Activated CD8-positive, alpha-beta memory T cell treated with anti-CD3 and anti-CD28 coated beads, Interleukin-2, amount 10 ng/mL, durations not matched to agents 7 days and 5 days (primary cell): ENCODE measurements at regions of chr3 and their contacts with region 1.

Region 1: GRCh38 chr3:42101048-42101447 is 9.9 kb downstream of the TRAK1 start:
- DNase-seq: no peak
- ATAC-seq: no peak
- H3K4me3 Mint-ChIP-seq: no peak overlapping the region
- H3K27ac Mint-ChIP-seq: no peak overlapping the region
- H3K4me1 Mint-ChIP-seq: peaks cover 11% of the 10 kb centered on the region
- H3K27me3 Mint-ChIP-seq: no peaks in the 10 kb centered on the region

Region 2: GRCh38 chr3:41893977-41894376 is 207.1 kb before region 1 on chr3:
- CTCF ChIA-PET with region 1: interaction called, 17 read pairs
- DNase-seq: no peak
- ATAC-seq: no peak
- H3K4me3 Mint-ChIP-seq: no peak overlapping the region
- H3K27ac Mint-ChIP-seq: no peak overlapping the region
- H3K4me1 Mint-ChIP-seq: no peaks in the 10 kb centered on the region
- H3K27me3 Mint-ChIP-seq: no peaks in the 10 kb centered on the region

Region 3: GRCh38 chr3:42081838-42082473 is 19.1 kb before region 1 on chr3:
- CTCF ChIA-PET with region 1: interaction called, 10 read pairs
- DNase-seq: no peak
- ATAC-seq: peak; percentile 60
- H3K4me3 Mint-ChIP-seq: peak overlapping the region; percentile 67
- H3K27ac Mint-ChIP-seq: peak overlapping the region; percentile 87
- H3K4me1 Mint-ChIP-seq: peaks cover 54% of the 10 kb centered on the region
- H3K27me3 Mint-ChIP-seq: no peaks in the 10 kb centered on the region

Region 4: GRCh38 chr3:42403737-42404136 is 302.7 kb after region 1 on chr3:
- CTCF ChIA-PET with region 1: no interaction called
- DNase-seq: no peak
- ATAC-seq: no peak
- H3K4me3 Mint-ChIP-seq: no peak overlapping the region
- H3K27ac Mint-ChIP-seq: no peak overlapping the region
- H3K4me1 Mint-ChIP-seq: peaks cover 3% of the 10 kb centered on the region
- H3K27me3 Mint-ChIP-seq: peaks cover 2% of the 10 kb centered on the region